ENCODE measurements at regions of chr9 and their contacts with region 1.

Region 1: GRCh38 chr9:133144137-133144903 is 19.4 kb downstream of the GBGT1 start:
- DNase-seq: peak; percentile 69
- H3K4me3 ChIP-seq: peak overlapping the region in 1 of 3 experiments; percentile 5
- H3K27ac ChIP-seq: no peak overlapping the region
- H3K4me1 ChIP-seq: peaks cover 15% of the 10 kb centered on the region
- H3K27me3 ChIP-seq: no peaks in the 10 kb centered on the region
- CTCF ChIP-seq: peak; percentile 97 to 99
- POLR2A ChIP-seq: no peak

Region 2: GRCh38 chr9:132894356-132895240 is 249.7 kb before region 1 on chr9:
- CTCF ChIA-PET with region 1: no interaction called
- POLR2A ChIA-PET with region 1: no interaction called
- dilution Hi-C with region 1: no loop called
- intact Hi-C with region 1: no loop called
- DNase-seq: no peak
- H3K4me3 ChIP-seq: no peak overlapping the region
- H3K27ac ChIP-seq: no peak overlapping the region
- H3K4me1 ChIP-seq: no peaks in the 10 kb centered on the region
- H3K27me3 ChIP-seq: no peaks in the 10 kb centered on the region
- CTCF ChIP-seq: no peak
- POLR2A ChIP-seq: no peak

Region 3: GRCh38 chr9:133023117-133023890 is 121.0 kb before region 1 on chr9:
- CTCF ChIA-PET with region 1: interaction called, 14 read pairs
- POLR2A ChIA-PET with region 1: no interaction called
- dilution Hi-C with region 1: no loop called
- intact Hi-C with region 1: loop called (anchors 1 kb)
- DNase-seq: no peak
- H3K4me3 ChIP-seq: no peak overlapping the region
- H3K27ac ChIP-seq: no peak overlapping the region
- H3K4me1 ChIP-seq: no peaks in the 10 kb centered on the region
- H3K27me3 ChIP-seq: no peaks in the 10 kb centered on the region
- CTCF ChIP-seq: no peak
- POLR2A ChIP-seq: no peak

Region 4: DNA sequence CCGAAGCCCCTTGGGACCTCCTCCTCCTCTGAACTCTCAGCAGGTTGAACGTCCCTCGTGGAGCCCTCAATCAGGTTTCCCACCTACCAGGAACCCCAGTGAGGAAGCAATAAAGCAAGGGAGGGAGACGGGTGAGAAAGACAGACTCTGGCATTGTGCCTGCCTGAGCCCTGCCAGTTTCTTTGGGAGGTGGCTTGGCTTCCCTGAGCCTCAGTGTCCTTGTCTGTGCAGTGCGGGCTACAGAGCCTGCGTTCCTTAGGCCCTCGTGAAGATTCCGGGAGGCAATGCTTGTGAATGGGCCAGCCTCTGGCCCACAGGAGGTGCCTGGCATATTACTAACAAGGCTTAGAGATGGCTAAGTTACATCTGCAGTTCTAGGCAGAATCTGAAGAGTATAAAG is 101.6 kb before region 1 on chr9:
- CTCF ChIA-PET with region 1: interaction called, 46 read pairs
- POLR2A ChIA-PET with region 1: no interaction called
- dilution Hi-C with region 1: no loop called
- intact Hi-C with region 1: loop called (anchors 1 kb)
- DNase-seq: no peak
- H3K4me3 ChIP-seq: no peak overlapping the region
- H3K27ac ChIP-seq: no peak overlapping the region
- H3K4me1 ChIP-seq: no peaks in the 10 kb centered on the region
- H3K27me3 ChIP-seq: no peaks in the 10 kb centered on the region
- CTCF ChIP-seq: no peak
- POLR2A ChIP-seq: no peak

Region 5: GRCh38 chr9:133067821-133068220 is 76.5 kb before region 1 on chr9:
- CTCF ChIA-PET with region 1: interaction called, 11 read pairs
- POLR2A ChIA-PET with region 1: no interaction called
- dilution Hi-C with region 1: no loop called
- intact Hi-C with region 1: no loop called
- DNase-seq: no peak
- H3K4me3 ChIP-seq: no peak overlapping the region
- H3K27ac ChIP-seq: no peak overlapping the region
- H3K4me1 ChIP-seq: no peaks in the 10 kb centered on the region
- H3K27me3 ChIP-seq: no peaks in the 10 kb centered on the region
- CTCF ChIP-seq: no peak
- POLR2A ChIP-seq: no peak

Region 6: GRCh38 chr9:133103183-133103986 is 40.9 kb before region 1 on chr9:
- CTCF ChIA-PET with region 1: interaction called, 147 read pairs
- POLR2A ChIA-PET with region 1: no interaction called
- dilution Hi-C with region 1: no loop called
- intact Hi-C with region 1: loop called (anchors 1 kb)
- DNase-seq: peak; percentile 50
- H3K4me3 ChIP-seq: no peak overlapping the region
- H3K27ac ChIP-seq: no peak overlapping the region
- H3K4me1 ChIP-seq: no peaks in the 10 kb centered on the region
- H3K27me3 ChIP-seq: no peaks in the 10 kb centered on the region
- CTCF ChIP-seq: peak; percentile 90 to 95
- POLR2A ChIP-seq: no peak

Region 7: DNA sequence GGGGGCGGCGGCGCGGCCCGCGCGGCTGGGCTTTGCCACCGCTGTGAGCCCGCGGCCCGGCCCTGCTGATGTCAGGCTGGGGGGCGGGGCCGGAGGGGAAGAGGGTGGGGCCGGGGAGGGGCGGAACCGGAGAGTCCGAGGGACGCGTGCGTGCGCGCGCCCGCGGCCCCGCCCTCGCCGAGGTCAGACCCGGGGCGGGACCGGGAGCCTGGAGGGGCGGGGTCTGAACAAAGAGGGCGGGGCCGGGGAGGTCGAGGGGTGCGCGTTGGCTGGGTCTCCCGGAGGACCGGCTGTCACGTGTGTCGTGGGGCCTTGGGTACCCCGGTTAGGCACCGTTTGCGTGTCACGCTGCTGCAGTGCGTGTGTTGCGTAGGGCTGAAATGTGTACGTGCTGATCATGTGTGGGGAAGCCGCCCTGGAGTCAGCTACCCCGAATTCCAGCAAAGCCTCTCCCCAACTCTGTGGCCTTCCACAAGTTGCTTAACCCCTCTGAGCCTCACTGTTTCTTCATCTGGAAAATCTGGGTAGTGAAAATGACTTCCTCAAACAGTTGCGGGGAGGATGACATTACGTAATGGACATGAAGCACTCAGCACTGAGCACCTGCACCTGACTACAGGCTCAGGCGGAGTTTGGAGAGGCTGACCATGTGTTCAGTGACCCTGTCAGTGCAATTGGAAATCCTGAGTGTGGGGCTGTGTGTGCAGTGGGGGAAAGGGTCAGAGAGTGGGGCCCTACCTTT is 23.0 kb before region 1 on chr9 and contains the start of gene RALGDS:
- CTCF ChIA-PET with region 1: interaction called, 72 read pairs
- POLR2A ChIA-PET with region 1: interaction called, 3 read pairs
- dilution Hi-C with region 1: no loop called
- intact Hi-C with region 1: loop called (anchors 1 kb)
- DNase-seq: peak; percentile 73
- H3K4me3 ChIP-seq: peak within 1 kb of the TSS; percentile 34 to 45 (median 41)
- H3K27ac ChIP-seq: no peak within 1 kb of the TSS
- H3K4me1 ChIP-seq: peaks cover 30% of the 10 kb centered on the region
- H3K27me3 ChIP-seq: no peaks in the 10 kb centered on the region
- CTCF ChIP-seq: no peak
- POLR2A ChIP-seq: no peak
- total RNA-seq, gene RALGDS: 41.4 and 43.1 TPM in 2 replicates

Region 8: DNA sequence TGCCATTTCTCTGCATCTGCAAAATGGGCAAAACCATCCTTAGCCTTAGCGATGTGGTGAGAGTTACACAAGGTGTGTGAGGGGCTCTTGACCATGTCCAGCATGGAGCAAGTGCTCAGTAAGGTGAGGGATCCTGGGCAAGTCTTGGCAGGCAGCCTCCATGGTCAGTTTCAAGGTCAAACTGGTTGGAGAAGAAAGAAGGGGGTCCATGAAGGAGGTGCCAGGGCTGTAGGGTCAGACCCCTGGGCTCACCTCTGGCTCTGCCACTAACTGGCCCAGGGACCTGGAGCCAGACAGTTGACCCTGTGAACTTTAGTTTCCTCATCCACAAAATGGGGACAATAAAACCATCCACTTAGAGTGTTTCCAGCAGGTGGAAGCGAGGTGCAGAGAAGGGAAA is 13.1 kb after region 1 on chr9:
- CTCF ChIA-PET with region 1: interaction called, 10 read pairs
- POLR2A ChIA-PET with region 1: no interaction called
- dilution Hi-C with region 1: no loop called
- intact Hi-C with region 1: no loop called
- DNase-seq: no peak
- H3K4me3 ChIP-seq: no peak overlapping the region
- H3K27ac ChIP-seq: no peak overlapping the region
- H3K4me1 ChIP-seq: no peaks in the 10 kb centered on the region
- H3K27me3 ChIP-seq: no peaks in the 10 kb centered on the region
- CTCF ChIP-seq: no peak
- POLR2A ChIP-seq: no peak

Measured in endothelial cell of umbilical vein (primary cell).